Heart left ventricle (tissue), 16 donors: ENCODE measurements at regions of chr3 and their contacts with region 1.

Region 1: DNA sequence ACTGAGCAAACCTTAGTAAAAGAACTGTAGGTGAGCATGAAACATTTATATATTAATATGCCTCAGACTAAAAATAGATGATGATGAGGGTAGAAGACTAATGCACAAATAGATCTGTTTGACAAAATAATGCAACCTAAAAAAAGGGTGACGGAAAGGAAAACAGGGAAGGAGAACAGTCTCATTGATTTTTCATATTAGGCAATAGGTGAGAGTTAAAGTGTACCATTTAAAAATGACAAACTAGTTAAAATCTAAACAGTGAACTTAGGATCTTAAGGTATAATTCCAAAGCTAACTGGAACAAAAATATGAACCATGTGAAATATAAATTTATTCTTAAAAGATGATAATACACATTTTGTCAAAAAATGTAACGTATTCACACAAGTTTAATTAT is 1347.6 kb downstream of the SI start:
- DNase-seq: no peak
- ATAC-seq: no peak
- H3K4me3 ChIP-seq: no peak overlapping the region
- H3K27ac ChIP-seq: no peak overlapping the region
- H3K4me1 ChIP-seq: no peaks in the 10 kb centered on the region
- H3K27me3 ChIP-seq: no peaks in the 10 kb centered on the region
- CTCF ChIP-seq: no peak
- POLR2A ChIP-seq: no peak

Region 2: GRCh38 chr3:163785693-163786092 is 55.0 kb after region 1 on chr3:
- intact Hi-C with region 1: loop called in 1 of 10 experiments (anchors 10 kb)
- DNase-seq: no peak
- ATAC-seq: no peak
- H3K4me3 ChIP-seq: no peak overlapping the region
- H3K27ac ChIP-seq: no peak overlapping the region
- H3K4me1 ChIP-seq: no peaks in the 10 kb centered on the region
- H3K27me3 ChIP-seq: no peaks in the 10 kb centered on the region
- CTCF ChIP-seq: no peak
- POLR2A ChIP-seq: no peak

Region 3: DNA sequence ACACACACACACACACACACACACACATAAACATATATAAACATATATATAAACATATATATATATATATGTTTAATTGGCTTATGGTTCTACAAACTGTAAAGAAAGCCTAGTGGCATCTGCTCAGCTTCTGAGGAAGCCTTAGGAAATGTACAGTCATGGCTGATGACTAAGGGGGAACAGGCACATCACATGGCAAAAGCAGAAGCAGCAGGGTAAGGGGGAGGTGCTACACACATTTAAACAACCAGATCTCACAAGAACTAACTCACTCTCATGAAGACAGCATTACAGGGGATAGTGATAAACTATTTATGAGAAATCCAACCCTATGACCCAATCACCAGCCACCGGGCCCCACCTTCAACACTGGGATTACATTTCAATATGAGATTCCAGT is 424.7 kb after region 1 on chr3:
- intact Hi-C with region 1: loop called in 1 of 10 experiments (anchors 5 kb)
- DNase-seq: no peak
- ATAC-seq: no peak
- H3K4me3 ChIP-seq: no peak overlapping the region
- H3K27ac ChIP-seq: no peak overlapping the region
- H3K4me1 ChIP-seq: no peaks in the 10 kb centered on the region
- H3K27me3 ChIP-seq: no peaks in the 10 kb centered on the region
- CTCF ChIP-seq: no peak
- POLR2A ChIP-seq: no peak